GM12878 (cell line): ENCODE measurements at regions of chr9 and their contacts with region 1.

Region 1: DNA sequence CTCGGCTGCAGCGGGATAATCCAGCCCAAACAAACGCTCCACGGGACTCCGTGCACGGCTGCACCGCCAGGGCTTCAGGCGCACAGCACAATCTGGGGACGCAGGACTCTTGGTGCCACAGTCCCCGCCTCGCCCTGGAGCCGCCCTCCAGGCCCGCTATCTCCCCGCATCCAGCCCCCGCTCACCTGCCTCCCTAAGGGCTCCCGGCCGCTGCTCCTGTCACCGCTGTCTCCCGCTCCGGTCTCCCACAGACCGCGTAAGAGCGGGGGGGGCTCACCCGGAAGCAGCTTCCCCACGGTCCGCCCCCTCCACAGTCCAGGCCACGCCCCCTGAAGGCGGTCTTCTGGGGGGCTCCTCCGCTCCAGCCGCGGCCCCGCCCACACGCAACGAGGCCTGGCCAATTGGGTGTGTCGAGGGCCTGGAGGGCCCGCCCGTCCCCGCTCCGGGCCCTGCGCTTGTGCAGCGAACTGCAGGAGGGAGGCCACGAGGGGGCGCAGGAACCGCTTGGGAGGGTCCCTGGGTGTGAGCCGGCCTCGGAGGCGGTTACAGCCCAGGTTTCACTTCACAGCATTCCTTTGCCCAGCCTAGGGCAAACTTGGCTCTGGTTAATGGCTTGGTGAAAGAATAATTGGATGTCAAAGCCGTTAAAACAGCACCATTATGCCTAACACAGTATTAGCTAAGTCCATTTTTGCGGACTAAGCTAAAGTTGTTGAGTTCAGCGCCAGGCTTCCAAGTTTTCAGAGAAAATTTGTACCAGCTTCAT is at the start of gene ALAD:
- DNase-seq: peak; percentile 87
- ATAC-seq: peak; percentile 100
- H3K4me3 ChIP-seq: peak within 1 kb of the TSS; percentile 86
- H3K27ac ChIP-seq: no peak within 1 kb of the TSS
- H3K4me1 ChIP-seq: no peaks in the 10 kb centered on the region
- H3K27me3 ChIP-seq: no peaks in the 10 kb centered on the region
- CTCF ChIP-seq: peak; percentile 95 to 99 (median 96)
- EP300 ChIP-seq: no peak
- POLR2A ChIP-seq: peak; percentile 80
- RAD21 ChIP-seq: peak; percentile 68
- polyA plus RNA-seq, gene ALAD: 2.4 to 3.9 TPM

Region 2: DNA sequence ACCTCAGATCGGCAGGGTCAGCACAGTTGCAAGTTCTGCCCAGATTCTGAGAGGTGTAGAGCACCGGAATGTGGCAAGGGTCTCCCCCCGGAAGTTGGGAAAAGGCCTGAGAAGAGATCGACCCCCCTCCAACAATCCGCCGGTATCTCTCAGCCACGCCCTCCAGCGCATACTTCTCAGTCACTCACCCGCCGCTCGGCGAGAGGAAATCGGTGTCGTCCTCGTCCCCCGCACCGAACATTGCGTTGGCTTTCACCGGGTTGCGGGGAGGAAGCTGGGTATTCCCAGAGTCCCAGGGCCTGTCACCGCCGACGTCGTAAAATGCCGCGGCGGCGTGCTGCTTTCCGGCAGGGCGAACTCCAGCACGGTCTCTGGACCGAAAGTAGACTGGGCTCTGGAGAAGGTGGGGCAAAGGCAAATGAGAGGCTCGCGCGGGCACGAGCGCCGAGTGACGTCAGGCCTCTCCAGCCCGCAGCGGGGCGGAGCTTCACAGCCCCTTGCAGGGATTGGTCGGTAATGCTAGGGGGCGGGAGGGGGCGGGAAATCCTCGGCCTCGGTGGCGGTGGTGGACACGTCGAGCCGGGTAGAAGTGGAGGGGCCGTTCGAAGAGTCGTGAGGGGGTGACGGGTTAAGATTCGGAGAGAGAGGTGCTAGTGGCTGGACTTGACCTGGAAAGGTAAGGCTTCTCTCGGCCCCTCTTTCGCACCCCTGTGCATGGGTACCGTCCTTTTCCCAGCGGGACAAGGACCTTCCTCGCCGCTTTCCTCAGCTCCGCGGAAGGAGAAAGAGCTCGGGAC is 180.0 kb before region 1 on chr9 and contains the starts of genes FKBP15 and SLC31A1:
- CTCF ChIA-PET with region 1: no interaction called
- POLR2A ChIA-PET with region 1: no interaction called
- RAD21 ChIA-PET with region 1: no interaction called
- SMC1A ChIA-PET with region 1: interaction called, 4 read pairs
- in situ Hi-C with region 1: no loop called
- intact Hi-C with region 1: loop called (anchors 10 kb)
- DNase-seq: peak; percentile 94
- ATAC-seq: peak; percentile 90
- H3K4me3 ChIP-seq: peak within 1 kb of the TSS; percentile 94
- H3K27ac ChIP-seq: peak within 1 kb of the TSS; percentile 95
- H3K4me1 ChIP-seq: peaks cover 4% of the 10 kb centered on the region; the same call in 1 of the 2 replicates
- H3K27me3 ChIP-seq: no peaks in the 10 kb centered on the region
- CTCF ChIP-seq: no peak
- EP300 ChIP-seq: peak in 1 of 2 experiments; percentile 29; a peak in 1 of 4 replicates
- POLR2A ChIP-seq: peak; percentile 80
- RAD21 ChIP-seq: no peak
- polyA plus RNA-seq, gene FKBP15: 5.0 to 8.2 TPM
- polyA plus RNA-seq, gene SLC31A1: 7.3 to 10.0 TPM

Region 3: DNA sequence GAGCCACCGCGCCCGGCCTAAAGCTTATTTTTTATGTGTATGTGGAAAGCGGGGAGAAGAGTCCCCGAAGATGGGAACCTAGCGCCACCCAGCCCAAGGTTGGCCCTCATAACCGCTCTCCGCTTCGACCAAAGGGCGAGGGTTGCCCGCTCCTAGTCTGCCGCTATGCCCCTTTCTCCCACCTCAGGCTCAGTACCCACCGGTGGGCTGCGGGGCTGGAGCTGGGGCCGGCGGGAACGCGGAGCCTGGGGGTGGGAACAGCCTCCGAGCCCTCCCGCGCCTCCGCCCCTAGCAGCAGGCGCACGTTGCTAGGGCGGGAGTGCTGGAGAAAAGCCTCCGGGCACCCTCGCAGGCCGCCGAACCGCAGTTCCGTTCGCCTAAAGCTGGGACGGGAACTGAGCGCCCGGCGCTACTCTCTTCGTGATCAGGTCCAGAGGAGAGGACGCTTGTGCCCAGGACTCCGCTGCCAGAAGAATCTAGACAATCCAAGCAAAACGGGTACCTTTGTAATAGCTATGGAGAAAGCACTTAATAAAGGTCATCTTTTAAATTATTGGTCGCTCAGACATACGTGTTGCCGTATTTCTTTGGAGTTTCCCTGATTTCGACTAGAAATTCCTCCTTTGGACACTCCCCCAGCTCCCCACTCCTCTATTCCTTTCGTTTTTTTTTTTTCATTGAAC is 61.1 kb before region 1 on chr9 and contains the start of gene WDR31:
- CTCF ChIA-PET with region 1: interaction called, 26 read pairs
- POLR2A ChIA-PET with region 1: interaction called, 3 read pairs
- RAD21 ChIA-PET with region 1: interaction called, 3 read pairs
- SMC1A ChIA-PET with region 1: interaction called, 5 read pairs
- in situ Hi-C with region 1: no loop called
- intact Hi-C with region 1: loop called (anchors 2 kb)
- DNase-seq: peak; percentile 56
- ATAC-seq: peak; percentile 99
- H3K4me3 ChIP-seq: peak within 1 kb of the TSS; percentile 92
- H3K27ac ChIP-seq: no peak within 1 kb of the TSS; the same call in 1 of the 2 replicates
- H3K4me1 ChIP-seq: no peaks in the 10 kb centered on the region
- H3K27me3 ChIP-seq: no peaks in the 10 kb centered on the region
- CTCF ChIP-seq: no peak
- EP300 ChIP-seq: no peak
- POLR2A ChIP-seq: no peak; the same call in none of the 2 replicates
- RAD21 ChIP-seq: 0 out of 2 replicates have a peak, but pooled peaks have one; percentile 4
- polyA plus RNA-seq, gene WDR31: 0.26 to 0.29 TPM

Region 4: GRCh38 chr9:113376634-113377567 is 24.3 kb before region 1 on chr9 and contains the start of gene HDHD3:
- CTCF ChIA-PET with region 1: interaction called, 7 read pairs
- POLR2A ChIA-PET with region 1: interaction called, 12 read pairs
- RAD21 ChIA-PET with region 1: interaction called, 6 read pairs
- SMC1A ChIA-PET with region 1: interaction called, 3 read pairs
- in situ Hi-C with region 1: no loop called
- intact Hi-C with region 1: loop called (anchors 2 kb)
- DNase-seq: peak; percentile 40
- ATAC-seq: peak; percentile 93
- H3K4me3 ChIP-seq: peak within 1 kb of the TSS; percentile 77
- H3K27ac ChIP-seq: peak within 1 kb of the TSS; percentile 74; the same call in 1 of the 2 replicates
- H3K4me1 ChIP-seq: peaks cover 26% of the 10 kb centered on the region
- H3K27me3 ChIP-seq: no peaks in the 10 kb centered on the region
- CTCF ChIP-seq: no peak
- EP300 ChIP-seq: no peak
- POLR2A ChIP-seq: peak; percentile 87
- RAD21 ChIP-seq: no peak
- polyA plus RNA-seq, gene HDHD3: 1.3 to 6.5 TPM

Region 5: DNA sequence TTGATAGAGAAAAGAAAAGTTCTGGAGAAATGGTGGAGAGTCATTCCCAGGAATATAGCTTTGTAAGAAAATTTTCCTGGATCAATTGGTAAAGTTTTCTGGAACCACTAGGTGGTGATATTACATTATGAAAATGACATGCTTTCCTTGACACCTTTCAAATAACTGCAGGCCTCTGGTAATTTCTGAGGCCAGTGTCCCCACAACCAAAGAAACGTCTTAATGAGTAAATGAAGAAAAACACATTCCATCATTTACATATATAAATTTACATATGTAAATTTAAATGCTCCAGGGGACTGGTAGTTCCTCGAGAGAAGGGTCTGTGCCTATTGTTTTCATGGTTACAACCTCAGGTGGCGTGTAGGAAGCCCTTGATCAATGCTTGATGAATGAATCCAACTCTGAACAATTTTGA is 45.1 kb after region 1 on chr9:
- CTCF ChIA-PET with region 1: interaction called, 22 read pairs
- POLR2A ChIA-PET with region 1: no interaction called
- RAD21 ChIA-PET with region 1: no interaction called
- SMC1A ChIA-PET with region 1: interaction called, 4 read pairs
- in situ Hi-C with region 1: no loop called
- intact Hi-C with region 1: no loop called
- DNase-seq: peak; percentile 25
- ATAC-seq: peak; percentile 80
- H3K4me3 ChIP-seq: no peak overlapping the region
- H3K27ac ChIP-seq: no peak overlapping the region
- H3K4me1 ChIP-seq: no peaks in the 10 kb centered on the region
- H3K27me3 ChIP-seq: no peaks in the 10 kb centered on the region
- CTCF ChIP-seq: peak; percentile 42 to 69 (median 50); a peak in 5 of 6 replicates
- EP300 ChIP-seq: no peak
- POLR2A ChIP-seq: no peak
- RAD21 ChIP-seq: peak; percentile 81